HCT116 (cell line): ENCODE measurements at regions of chr22 and their contacts with region 1.

Region 1: DNA sequence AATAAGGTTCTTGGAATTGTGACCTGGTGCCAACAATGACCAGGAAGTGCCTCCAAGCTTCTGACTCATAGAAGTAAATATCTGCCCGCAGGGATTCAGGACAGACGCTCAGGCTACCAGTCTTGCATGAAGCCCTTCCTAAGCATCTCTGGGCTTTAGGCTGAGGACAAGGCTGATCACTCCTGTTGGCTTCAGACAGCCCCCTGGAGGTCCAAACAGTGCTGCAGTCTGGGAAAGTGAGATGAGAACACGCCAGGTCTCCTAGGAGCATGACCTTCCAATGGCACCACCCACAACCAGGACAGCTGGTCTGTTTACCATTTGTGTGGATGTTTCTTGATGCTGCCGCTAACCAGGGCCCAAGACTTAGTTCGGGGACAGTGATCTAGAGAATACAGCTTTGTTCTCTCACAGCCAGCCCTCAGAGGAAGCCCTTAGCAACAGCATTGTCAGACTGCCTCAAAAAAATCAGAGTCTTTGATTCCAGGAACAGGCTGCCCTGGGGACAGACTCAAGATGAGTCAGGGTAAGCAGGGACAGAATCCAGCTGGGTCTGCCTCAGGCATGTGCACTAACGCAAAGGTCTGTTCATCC is 111.2 kb downstream of the ZNF280B start:
- DNase-seq: peak; percentile 24
- ATAC-seq: peak; percentile 80
- H3K4me3 ChIP-seq: peak overlapping the region in 1 of 2 experiments; percentile 11; a peak in 2 of 4 replicates
- H3K27ac ChIP-seq: no peak overlapping the region; the same call in 1 of the 2 replicates
- H3K4me1 ChIP-seq: peaks cover 13 to 17% of the 10 kb centered on the region in 2 experiments; a peak in 3 of 4 replicates
- H3K27me3 ChIP-seq: no peaks in the 10 kb centered on the region; the same call in 1 of the 2 replicates
- CTCF ChIP-seq: no peak; a peak in 1 of 6 replicates
- POLR2A ChIP-seq: no peak
- RAD21 ChIP-seq: no peak

Region 2: DNA sequence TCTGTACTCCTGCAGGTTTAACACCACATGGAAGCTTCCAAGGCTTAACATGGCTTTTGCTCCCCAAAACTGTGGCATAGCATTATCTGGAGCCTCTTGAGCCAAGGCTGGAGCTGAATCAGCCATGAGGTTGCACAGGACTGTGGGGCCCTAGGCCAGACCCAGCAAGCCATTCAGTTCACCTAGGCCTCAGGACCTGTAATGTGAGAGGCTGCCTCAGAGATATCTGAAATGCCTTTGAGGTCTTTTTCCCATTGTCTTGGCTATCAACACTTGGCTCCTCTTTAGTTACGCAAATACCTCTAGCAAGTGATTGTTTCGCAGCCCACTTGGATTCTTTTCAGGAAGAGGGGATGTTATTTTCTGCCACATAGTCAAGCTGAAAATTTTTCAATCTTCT is 80.8 kb before region 1 on chr22:
- CTCF ChIA-PET with region 1: no interaction called
- POLR2A ChIA-PET with region 1: no interaction called
- RAD21 ChIA-PET with region 1: no interaction called
- intact Hi-C with region 1: no loop called
- DNase-seq: no peak
- ATAC-seq: no peak
- H3K4me3 ChIP-seq: no peak overlapping the region
- H3K27ac ChIP-seq: no peak overlapping the region
- H3K4me1 ChIP-seq: no peaks in the 10 kb centered on the region
- H3K27me3 ChIP-seq: no peaks in the 10 kb centered on the region
- CTCF ChIP-seq: no peak
- POLR2A ChIP-seq: no peak
- RAD21 ChIP-seq: no peak

Region 3: GRCh38 chr22:22349455-22349836 is 47.9 kb before region 1 on chr22:
- CTCF ChIA-PET with region 1: interaction called, 3 read pairs
- POLR2A ChIA-PET with region 1: no interaction called
- RAD21 ChIA-PET with region 1: no interaction called
- intact Hi-C with region 1: loop called (anchors 1 kb)
- DNase-seq: no peak
- ATAC-seq: no peak
- H3K4me3 ChIP-seq: no peak overlapping the region
- H3K27ac ChIP-seq: no peak overlapping the region
- H3K4me1 ChIP-seq: peaks cover 3 to 5% of the 10 kb centered on the region in 2 experiments; a peak in 2 of 4 replicates
- H3K27me3 ChIP-seq: peaks cover 25% of the 10 kb centered on the region
- CTCF ChIP-seq: no peak
- POLR2A ChIP-seq: no peak
- RAD21 ChIP-seq: no peak

Region 4: GRCh38 chr22:22474733-22475132 is 77.4 kb after region 1 on chr22:
- CTCF ChIA-PET with region 1: no interaction called
- POLR2A ChIA-PET with region 1: no interaction called
- RAD21 ChIA-PET with region 1: no interaction called
- intact Hi-C with region 1: no loop called
- DNase-seq: no peak
- ATAC-seq: no peak
- H3K4me3 ChIP-seq: no peak overlapping the region
- H3K27ac ChIP-seq: no peak overlapping the region
- H3K4me1 ChIP-seq: no peaks in the 10 kb centered on the region
- H3K27me3 ChIP-seq: no peaks in the 10 kb centered on the region
- CTCF ChIP-seq: no peak
- POLR2A ChIP-seq: no peak
- RAD21 ChIP-seq: no peak